Right lobe of liver (tissue), 6 donors: ENCODE measurements at regions of chr1 and their contacts with region 1.

Region 1: GRCh38 chr1:39960431-39960958 is 5.5 kb downstream of the MFSD2A start:
- DNase-seq: peak; percentile 83 to 91 (median 90)
- ATAC-seq: peak; percentile 61 to 79 (median 65)
- H3K4me3 ChIP-seq: peak overlapping the region in 2 of 3 donors; percentile 40 to 99
- H3K27ac ChIP-seq: peak overlapping the region; percentile 78 to 96 (median 79)
- H3K4me1 ChIP-seq: peaks cover 0 to 59% (median 16%) of the 10 kb centered on the region in 4 donors
- H3K27me3 ChIP-seq: no peaks in the 10 kb centered on the region
- CTCF ChIP-seq: no peak
- POLR2A ChIP-seq: peak; percentile 16

Region 2: GRCh38 chr1:39886757-39887231 is 73.7 kb before region 1 on chr1:
- intact Hi-C with region 1: no loop called
- DNase-seq: no peak
- ATAC-seq: no peak
- H3K4me3 ChIP-seq: no peak overlapping the region
- H3K27ac ChIP-seq: no peak overlapping the region
- H3K4me1 ChIP-seq: peaks cover 0 to 15% (median 3%) of the 10 kb centered on the region in 4 donors
- H3K27me3 ChIP-seq: no peaks in the 10 kb centered on the region
- CTCF ChIP-seq: no peak
- POLR2A ChIP-seq: no peak

Region 3: DNA sequence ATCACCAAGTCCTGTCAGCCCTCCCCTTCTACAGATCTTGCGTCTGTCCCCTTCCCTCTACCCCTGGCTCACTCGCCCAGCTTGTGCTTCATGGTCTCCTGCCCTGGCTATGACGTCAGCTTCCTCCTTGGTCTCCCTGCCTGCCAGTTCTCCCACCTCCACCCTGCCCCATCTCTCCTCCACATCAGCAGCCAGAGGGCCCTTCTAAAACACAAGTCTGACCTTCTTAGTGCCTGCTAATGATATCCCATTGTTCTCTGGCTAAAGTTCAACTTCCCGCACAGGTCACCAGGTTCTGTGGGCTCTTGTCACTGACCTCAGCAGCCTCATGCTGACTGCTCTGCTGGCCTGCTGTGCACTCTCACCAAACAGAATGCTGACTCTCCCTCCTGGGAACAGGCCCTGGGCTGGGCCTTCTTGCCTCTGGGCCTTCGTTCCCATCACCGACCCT is 34.1 kb before region 1 on chr1:
- intact Hi-C with region 1: loop called (anchors 5 kb)
- DNase-seq: peak; percentile 58 to 81 (median 79)
- ATAC-seq: peak; percentile 41 to 62 (median 50)
- H3K4me3 ChIP-seq: no peak overlapping the region
- H3K27ac ChIP-seq: peak overlapping the region; percentile 78 to 98 (median 86)
- H3K4me1 ChIP-seq: peaks cover 0 to 58% (median 38%) of the 10 kb centered on the region in 4 donors
- H3K27me3 ChIP-seq: no peaks in the 10 kb centered on the region
- CTCF ChIP-seq: no peak
- POLR2A ChIP-seq: peak; percentile 37